ENCODE measurements at regions of chr7 and their contacts with region 1.

Region 1: DNA sequence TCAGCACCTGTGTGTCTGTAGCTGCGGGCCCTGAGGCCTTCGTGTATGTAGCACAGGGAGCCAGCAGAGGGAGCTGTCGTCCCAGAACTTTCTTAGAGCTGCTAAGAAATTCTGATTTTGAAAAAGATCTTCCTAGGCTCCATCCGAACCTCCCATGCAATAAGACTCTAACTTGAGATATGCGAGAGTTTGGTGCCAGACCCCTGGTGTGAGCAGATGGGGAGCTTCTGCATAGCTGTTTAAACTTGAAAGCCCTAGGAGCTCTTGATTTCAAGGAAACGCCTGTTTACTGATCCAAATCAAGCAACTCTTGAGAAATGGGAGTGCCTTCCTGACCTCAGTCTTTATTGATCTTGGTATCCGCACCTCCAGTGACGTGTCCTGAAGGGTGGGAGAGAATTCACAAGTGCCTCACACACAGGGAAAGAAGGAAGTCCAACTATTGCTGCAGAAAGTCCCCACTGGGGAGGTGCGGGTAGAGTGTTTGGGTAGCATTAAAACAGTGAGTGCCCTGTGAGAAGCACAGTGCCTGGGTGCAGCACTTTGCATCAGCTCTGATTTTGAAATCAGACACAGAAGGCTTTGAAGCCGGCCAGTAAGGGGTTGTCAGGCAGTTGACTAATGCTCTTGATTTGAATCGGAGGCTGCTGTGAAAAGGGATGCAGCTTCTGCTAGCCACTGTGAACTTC is 66.4 kb upstream of the STRIP2 start:
- DNase-seq: peak; percentile 73
- H3K4me3 Mint-ChIP-seq: no peak overlapping the region
- H3K27ac Mint-ChIP-seq: no peak overlapping the region
- H3K4me1 Mint-ChIP-seq: no peaks in the 10 kb centered on the region
- H3K27me3 Mint-ChIP-seq: no peaks in the 10 kb centered on the region
- CTCF ChIP-seq: peak; percentile 86

Region 2: DNA sequence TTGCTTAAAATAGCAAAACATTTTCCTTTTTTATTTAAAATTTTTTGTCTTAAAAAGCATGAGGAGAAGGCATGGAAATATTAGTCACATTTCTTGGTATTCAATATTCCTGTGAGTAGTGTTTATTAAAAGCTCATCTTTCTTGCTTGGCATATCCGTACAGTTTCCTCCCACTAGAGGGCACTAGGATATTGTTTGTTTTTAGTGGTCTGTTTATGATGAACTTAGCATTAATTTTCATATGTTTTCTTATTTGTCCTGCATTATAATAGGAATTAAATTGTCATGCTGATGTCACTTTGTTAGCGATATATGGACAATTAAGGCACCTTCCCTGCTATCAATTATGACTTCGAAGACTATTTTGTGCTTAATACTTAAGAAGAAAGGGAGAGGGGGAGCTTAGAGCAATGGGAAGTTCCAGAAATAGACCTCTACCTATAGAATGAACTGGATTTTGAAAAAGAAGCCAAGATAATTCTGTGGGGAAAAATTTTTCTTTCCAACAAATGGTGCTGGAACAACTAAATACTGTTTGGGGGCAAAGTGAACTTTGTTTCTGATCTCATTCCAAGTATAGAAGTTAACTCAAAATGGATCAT is 24.6 kb before region 1 on chr7:
- CTCF ChIA-PET with region 1: interaction called, 19 read pairs
- POLR2A ChIA-PET with region 1: interaction called, 3 read pairs
- intact Hi-C with region 1: no loop called
- DNase-seq: peak; percentile 53
- H3K4me3 Mint-ChIP-seq: no peak overlapping the region
- H3K27ac Mint-ChIP-seq: no peak overlapping the region
- H3K4me1 Mint-ChIP-seq: peaks cover 7% of the 10 kb centered on the region
- H3K27me3 Mint-ChIP-seq: no peaks in the 10 kb centered on the region
- CTCF ChIP-seq: peak; percentile 56

Region 3: GRCh38 chr7:129401967-129402860 is 34.4 kb after region 1 on chr7:
- CTCF ChIA-PET with region 1: interaction called, 10 read pairs
- POLR2A ChIA-PET with region 1: no interaction called
- intact Hi-C with region 1: no loop called
- DNase-seq: peak; percentile 30
- H3K4me3 Mint-ChIP-seq: no peak overlapping the region
- H3K27ac Mint-ChIP-seq: no peak overlapping the region
- H3K4me1 Mint-ChIP-seq: peaks cover 9% of the 10 kb centered on the region
- H3K27me3 Mint-ChIP-seq: no peaks in the 10 kb centered on the region
- CTCF ChIP-seq: peak; percentile 26

Region 4: GRCh38 chr7:129635300-129636029 is 267.6 kb after region 1 on chr7:
- CTCF ChIA-PET with region 1: interaction called, 11 read pairs
- POLR2A ChIA-PET with region 1: interaction called, 3 read pairs
- intact Hi-C with region 1: loop called (anchors 1 kb)
- DNase-seq: peak; percentile 80
- H3K4me3 Mint-ChIP-seq: no peak overlapping the region
- H3K27ac Mint-ChIP-seq: no peak overlapping the region
- H3K4me1 Mint-ChIP-seq: peaks cover 12% of the 10 kb centered on the region
- H3K27me3 Mint-ChIP-seq: no peaks in the 10 kb centered on the region
- CTCF ChIP-seq: peak; percentile 64

Measured in MCF 10A (cell line).